Heart right ventricle (tissue), 16 donors: ENCODE measurements at regions of chr4 and their contacts with region 1.

Region 1: DNA sequence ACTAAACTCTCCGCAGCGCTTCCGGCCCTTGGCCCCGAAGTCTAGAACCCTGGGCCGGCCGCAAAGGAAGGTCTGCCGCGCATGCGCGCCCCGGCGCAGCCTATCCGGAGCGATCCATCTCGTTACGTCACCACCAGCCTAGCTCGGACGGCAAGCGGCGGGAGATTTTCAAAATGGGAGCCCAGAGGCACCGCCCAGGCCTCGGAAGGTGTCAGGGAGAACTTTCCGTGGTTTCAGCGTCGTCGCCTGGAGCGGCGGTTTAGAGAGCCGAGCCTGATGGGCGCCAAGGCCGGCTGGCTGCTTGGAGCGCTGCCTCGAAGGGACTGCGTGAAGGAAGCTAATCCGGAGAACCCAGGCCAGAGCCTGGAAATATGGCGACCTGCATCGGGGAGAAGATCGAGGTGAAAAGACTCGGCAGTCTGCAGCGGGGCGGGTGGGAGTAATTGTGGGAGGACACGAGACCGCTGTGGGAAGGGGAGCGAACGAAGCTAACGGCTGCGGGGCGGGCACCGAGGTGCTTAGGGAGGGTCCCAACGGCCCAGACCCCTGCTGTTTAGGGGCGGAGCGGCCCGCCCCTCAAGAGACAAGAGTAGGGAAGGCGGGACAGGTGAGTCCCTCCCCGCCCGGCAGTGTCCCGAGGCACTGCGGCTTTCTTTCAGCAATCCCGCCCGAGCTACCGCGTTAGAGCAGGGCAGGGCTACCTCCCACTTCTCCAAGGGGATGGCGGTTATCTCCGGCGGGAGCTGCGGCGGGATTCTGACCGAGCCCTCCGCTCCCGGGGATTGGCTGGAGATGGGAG is at the start of gene PLK4:
- DNase-seq: peak; percentile 94
- ATAC-seq: peak; percentile 99
- H3K4me3 ChIP-seq: peak within 1 kb of the TSS; percentile 56 to 93 (median 76)
- H3K27ac ChIP-seq: peak within 1 kb of the TSS in 9 of 10 donors; percentile 50 to 89 (median 77)
- H3K4me1 ChIP-seq: peaks cover 0 to 20% (median 15%) of the 10 kb centered on the region in 9 donors
- H3K27me3 ChIP-seq: no peaks in the 10 kb centered on the region
- CTCF ChIP-seq: no peak
- total RNA-seq, gene PLK4: 0.25 to 3.7 (median 0.62) TPM

Region 2: GRCh38 chr4:127959794-127960193 is 78.8 kb after region 1 on chr4:
- intact Hi-C with region 1: loop called in 2 of 10 experiments (anchors 5 to 10 kb)
- DNase-seq: no peak
- ATAC-seq: no peak
- H3K4me3 ChIP-seq: no peak overlapping the region
- H3K27ac ChIP-seq: no peak overlapping the region
- H3K4me1 ChIP-seq: peaks cover 0 to 16% (median 5%) of the 10 kb centered on the region in 9 donors
- H3K27me3 ChIP-seq: no peaks in the 10 kb centered on the region
- CTCF ChIP-seq: no peak

Region 3: DNA sequence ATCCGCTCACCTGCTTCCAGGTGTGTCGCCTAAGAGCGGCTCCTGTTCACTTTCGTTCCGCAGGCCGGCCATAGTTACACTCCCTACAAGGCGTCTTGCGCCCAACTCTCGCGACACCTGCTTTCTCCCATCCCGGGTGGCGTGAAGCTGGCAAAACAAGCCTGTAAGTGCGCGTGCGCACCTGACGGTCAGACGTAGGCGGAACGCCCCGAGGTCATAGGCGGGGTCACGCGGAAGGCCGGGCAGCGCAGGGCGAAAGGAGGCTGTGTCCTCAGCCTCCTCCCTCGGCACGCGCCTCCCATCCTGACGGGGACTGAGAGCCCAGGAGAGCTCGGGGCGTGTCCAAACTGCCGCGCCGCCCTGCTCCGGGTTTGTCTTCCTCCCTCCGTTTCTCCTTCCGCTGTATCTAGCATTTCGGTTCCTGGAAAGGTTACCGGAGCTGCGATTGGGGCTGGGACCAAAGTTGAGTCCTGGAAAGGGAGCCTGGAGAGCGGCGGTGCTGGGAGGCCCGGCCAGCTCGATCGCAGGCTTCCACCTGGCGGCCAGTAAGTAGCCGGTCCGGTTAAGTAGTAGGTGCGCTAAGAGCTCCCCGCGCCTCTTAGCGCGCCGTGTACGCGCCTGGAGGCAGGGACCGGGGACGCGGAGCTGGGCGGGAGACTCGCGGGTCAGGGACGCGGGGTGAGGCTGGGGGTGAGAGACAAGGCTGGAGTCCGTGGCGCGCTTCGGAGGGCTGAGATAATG is 84.3 kb after region 1 on chr4 and contains the starts of genes ABHD18 and MFSD8:
- intact Hi-C with region 1: loop called in 2 of 10 experiments (anchors 5 to 10 kb)
- DNase-seq: peak; percentile 98 to 99
- ATAC-seq: peak; percentile 97 to 99 (median 97)
- H3K4me3 ChIP-seq: peak within 1 kb of the TSS; percentile 60 to 98 (median 82)
- H3K27ac ChIP-seq: peak within 1 kb of the TSS; percentile 76 to 96 (median 93)
- H3K4me1 ChIP-seq: peaks cover 0 to 54% (median 34%) of the 10 kb centered on the region in 9 donors
- H3K27me3 ChIP-seq: no peaks in the 10 kb centered on the region
- CTCF ChIP-seq: peak in 8 of 9 donors; percentile 19 to 64 (median 44)
- total RNA-seq, gene ABHD18: 12.6 to 55.9 (median 30.4) TPM
- total RNA-seq, gene MFSD8: 6.9 to 14.3 (median 11.0) TPM

Region 4: GRCh38 chr4:128060699-128061565 is 180.0 kb after region 1 on chr4 and contains the start of gene LARP1B:
- intact Hi-C with region 1: loop called in 1 of 10 experiments (anchors 5 kb)
- DNase-seq: peak; percentile 95 to 96
- ATAC-seq: peak; percentile 96 to 98 (median 97)
- H3K4me3 ChIP-seq: peak within 1 kb of the TSS; percentile 58 to 85 (median 73)
- H3K27ac ChIP-seq: peak within 1 kb of the TSS; percentile 76 to 98 (median 94)
- H3K4me1 ChIP-seq: peaks cover 0 to 24% (median 9%) of the 10 kb centered on the region in 9 donors
- H3K27me3 ChIP-seq: no peaks in the 10 kb centered on the region
- CTCF ChIP-seq: peak in 2 of 9 donors; percentile 10 to 11
- total RNA-seq, gene LARP1B: 14.5 to 20.3 (median 18.9) TPM